ENCODE measurements at regions of chr6 and their contacts with region 1.

Region 1: DNA sequence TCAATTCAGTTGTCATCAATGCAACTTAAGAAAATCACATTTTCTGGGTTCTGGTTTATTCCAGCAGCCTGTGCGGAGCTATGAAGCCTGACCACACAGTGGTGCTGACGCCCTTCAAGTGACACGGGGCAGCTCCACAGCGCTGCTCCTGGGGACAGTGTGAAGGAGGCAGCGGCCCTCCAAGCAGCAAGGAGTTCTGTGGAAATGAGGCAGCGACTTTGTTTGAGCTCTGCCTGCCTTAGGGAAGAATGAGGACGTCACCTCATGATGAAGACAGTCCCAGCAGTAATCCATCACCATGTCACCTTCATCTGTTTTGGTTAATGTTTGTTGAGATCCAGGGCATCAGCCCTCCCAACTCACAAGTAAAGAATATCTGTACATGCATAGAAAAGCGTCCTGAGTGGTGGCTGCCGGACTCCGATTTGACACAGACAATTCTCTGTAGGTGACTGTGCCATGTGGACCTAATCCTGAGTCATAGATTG is 168.5 kb upstream of the UST start:
- DNase-seq: peak; percentile 76 to 77
- H3K4me3 ChIP-seq: no peak overlapping the region
- H3K4me3 Mint-ChIP-seq: no peak overlapping the region
- H3K27ac Mint-ChIP-seq: no peak overlapping the region
- H3K4me1 ChIP-seq: no peaks in the 10 kb centered on the region
- H3K4me1 Mint-ChIP-seq: no peaks in the 10 kb centered on the region
- H3K27me3 ChIP-seq: no peaks in the 10 kb centered on the region
- H3K27me3 Mint-ChIP-seq: peaks cover 12% of the 10 kb centered on the region
- CTCF ChIP-seq: peak; percentile 75 to 96

Region 2: DNA sequence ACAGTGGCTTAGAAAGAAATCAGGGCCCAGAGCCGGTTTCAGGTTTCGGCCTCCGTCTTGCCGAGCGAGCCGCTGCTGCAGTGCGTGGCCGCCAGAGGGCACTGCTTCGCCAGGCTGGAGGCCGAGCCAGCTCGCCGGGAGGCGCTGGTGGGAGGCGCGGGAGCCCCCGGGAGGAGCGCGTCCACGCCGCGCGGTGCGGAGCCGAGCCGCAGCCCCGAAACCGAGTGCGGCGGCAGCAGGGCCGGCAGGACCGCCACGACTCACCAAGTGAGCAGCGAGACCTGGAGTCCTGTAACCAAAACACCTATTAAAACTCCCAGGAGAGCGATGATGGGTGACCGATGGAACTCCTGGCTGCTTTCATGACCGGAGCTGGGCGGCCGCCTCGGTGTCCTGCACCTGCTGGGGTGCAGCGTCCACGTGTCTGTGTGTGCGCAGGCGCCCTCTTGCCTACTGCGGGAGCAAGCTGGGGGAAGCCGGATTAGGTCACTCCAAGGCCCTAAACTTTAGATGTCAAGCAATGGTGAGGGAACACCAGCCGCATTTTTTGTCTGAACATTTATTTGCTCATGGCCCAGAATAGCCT is 18.3 kb before region 1 on chr6:
- CTCF ChIA-PET with region 1: interaction called, 10 read pairs
- POLR2A ChIA-PET with region 1: no interaction called
- intact Hi-C with region 1: no loop called
- DNase-seq: peak; percentile 57 to 80
- H3K4me3 ChIP-seq: peak overlapping the region; percentile 49
- H3K4me3 Mint-ChIP-seq: peak overlapping the region; percentile 55
- H3K27ac Mint-ChIP-seq: no peak overlapping the region
- H3K4me1 ChIP-seq: no peaks in the 10 kb centered on the region
- H3K4me1 Mint-ChIP-seq: no peaks in the 10 kb centered on the region
- H3K27me3 ChIP-seq: peaks cover 1% of the 10 kb centered on the region; the same call in 1 of the 2 replicates
- H3K27me3 Mint-ChIP-seq: peaks cover 11% of the 10 kb centered on the region
- CTCF ChIP-seq: peak; percentile 83 to 94

Region 3: DNA sequence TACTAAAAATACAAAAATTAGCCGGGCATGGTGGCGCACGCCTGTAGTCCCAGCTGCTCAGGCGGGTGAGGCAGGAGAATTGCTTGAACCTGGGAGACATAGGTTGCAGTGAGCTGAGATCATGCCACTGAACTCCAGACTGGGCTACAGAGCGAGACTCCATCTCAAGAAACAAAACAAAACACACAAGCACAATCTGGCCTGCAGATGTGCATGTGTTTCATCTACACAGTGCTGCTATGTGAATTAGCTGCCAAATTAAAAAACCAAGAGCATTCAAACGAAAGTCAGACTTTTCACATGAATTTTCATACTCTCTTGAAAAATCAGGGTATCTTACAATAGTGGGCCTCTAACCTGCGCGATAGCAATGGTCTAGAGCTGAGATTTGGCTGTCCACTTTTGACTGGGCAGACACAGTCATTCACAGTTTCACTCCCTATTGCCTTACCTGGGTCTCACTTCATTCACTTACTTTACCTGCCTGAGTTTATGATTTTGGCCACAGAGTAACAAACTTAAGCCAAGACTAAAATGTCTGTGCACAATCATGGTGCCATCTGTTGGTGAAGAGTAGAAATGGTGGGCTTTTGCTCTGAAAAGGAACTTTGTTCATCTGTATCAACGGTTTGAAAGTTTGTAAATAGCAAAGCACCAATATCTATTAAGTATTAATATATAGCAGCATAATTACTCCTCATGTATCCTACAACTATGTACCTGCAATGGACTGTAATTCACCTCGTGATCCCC is 30.1 kb after region 1 on chr6:
- CTCF ChIA-PET with region 1: interaction called, 4 read pairs
- POLR2A ChIA-PET with region 1: no interaction called
- intact Hi-C with region 1: loop called (anchors 1 kb)
- DNase-seq: peak in 1 of 2 experiments; percentile 22
- H3K4me3 ChIP-seq: no peak overlapping the region
- H3K4me3 Mint-ChIP-seq: no peak overlapping the region
- H3K27ac Mint-ChIP-seq: no peak overlapping the region
- H3K4me1 ChIP-seq: no peaks in the 10 kb centered on the region
- H3K4me1 Mint-ChIP-seq: no peaks in the 10 kb centered on the region
- H3K27me3 ChIP-seq: no peaks in the 10 kb centered on the region
- H3K27me3 Mint-ChIP-seq: peaks cover 12% of the 10 kb centered on the region
- CTCF ChIP-seq: peak; percentile 60 to 76

Region 4: GRCh38 chr6:148746363-148747144 is 168.3 kb after region 1 on chr6 and contains the start of gene UST:
- CTCF ChIA-PET with region 1: no interaction called
- POLR2A ChIA-PET with region 1: no interaction called
- intact Hi-C with region 1: loop called (anchors 2 kb)
- DNase-seq: peak in 1 of 2 experiments; percentile 40
- H3K4me3 ChIP-seq: peak within 1 kb of the TSS; percentile 48
- H3K4me3 Mint-ChIP-seq: peak within 1 kb of the TSS; percentile 87
- H3K27ac Mint-ChIP-seq: no peak within 1 kb of the TSS
- H3K4me1 ChIP-seq: peaks cover 9% of the 10 kb centered on the region; the same call in 1 of the 2 replicates
- H3K4me1 Mint-ChIP-seq: no peaks in the 10 kb centered on the region
- H3K27me3 ChIP-seq: peaks cover 3% of the 10 kb centered on the region
- H3K27me3 Mint-ChIP-seq: peaks cover 62% of the 10 kb centered on the region
- CTCF ChIP-seq: peak; percentile 28 to 40
- total RNA-seq, gene UST: not detected in 2 replicates

Region 5: GRCh38 chr6:148947621-148948444 is 369.5 kb after region 1 on chr6:
- CTCF ChIA-PET with region 1: no interaction called
- POLR2A ChIA-PET with region 1: no interaction called
- intact Hi-C with region 1: loop called (anchors 1 kb)
- DNase-seq: peak; percentile 87 to 88
- H3K4me3 ChIP-seq: no peak overlapping the region; the same call in 1 of the 2 replicates
- H3K4me3 Mint-ChIP-seq: peak overlapping the region; percentile 62
- H3K27ac Mint-ChIP-seq: no peak overlapping the region
- H3K4me1 ChIP-seq: no peaks in the 10 kb centered on the region; the same call in 1 of the 2 replicates
- H3K4me1 Mint-ChIP-seq: peaks cover 7% of the 10 kb centered on the region
- H3K27me3 ChIP-seq: no peaks in the 10 kb centered on the region
- H3K27me3 Mint-ChIP-seq: peaks cover 7% of the 10 kb centered on the region
- CTCF ChIP-seq: peak; percentile 86 to 89

Region 6: GRCh38 chr6:148972481-148972880 is 394.2 kb after region 1 on chr6:
- CTCF ChIA-PET with region 1: interaction called, 17 read pairs
- POLR2A ChIA-PET with region 1: no interaction called
- intact Hi-C with region 1: loop called (anchors 1 kb)
- DNase-seq: peak; percentile 72 to 79
- H3K4me3 ChIP-seq: no peak overlapping the region
- H3K4me3 Mint-ChIP-seq: no peak overlapping the region
- H3K27ac Mint-ChIP-seq: no peak overlapping the region
- H3K4me1 ChIP-seq: no peaks in the 10 kb centered on the region
- H3K4me1 Mint-ChIP-seq: no peaks in the 10 kb centered on the region
- H3K27me3 ChIP-seq: no peaks in the 10 kb centered on the region; the same call in none of the 2 replicates
- H3K27me3 Mint-ChIP-seq: peaks cover 15% of the 10 kb centered on the region
- CTCF ChIP-seq: peak in 1 of 2 experiments; percentile 16

Region 7: GRCh38 chr6:149028767-149029405 is 450.6 kb after region 1 on chr6:
- CTCF ChIA-PET with region 1: no interaction called
- POLR2A ChIA-PET with region 1: no interaction called
- intact Hi-C with region 1: loop called (anchors 5 kb)
- DNase-seq: peak; percentile 55 to 74
- H3K4me3 ChIP-seq: no peak overlapping the region
- H3K4me3 Mint-ChIP-seq: no peak overlapping the region
- H3K27ac Mint-ChIP-seq: no peak overlapping the region
- H3K4me1 ChIP-seq: no peaks in the 10 kb centered on the region
- H3K4me1 Mint-ChIP-seq: peaks cover 6% of the 10 kb centered on the region
- H3K27me3 ChIP-seq: no peaks in the 10 kb centered on the region
- H3K27me3 Mint-ChIP-seq: no peaks in the 10 kb centered on the region
- CTCF ChIP-seq: peak; percentile 42 to 61